B cell (primary cell): ENCODE measurements at regions of chr1 and their contacts with region 1.

Region 1: GRCh38 chr1:201709564-201710295 is 119.2 kb upstream of the IPO9 start:
- DNase-seq: peak; percentile 68
- ATAC-seq: peak; percentile 87
- H3K4me3 ChIP-seq: no peak overlapping the region
- H3K4me3 Mint-ChIP-seq: no peak overlapping the region
- H3K27ac ChIP-seq: no peak overlapping the region
- H3K27ac Mint-ChIP-seq: no peak overlapping the region
- H3K4me1 ChIP-seq: no peaks in the 10 kb centered on the region
- H3K4me1 Mint-ChIP-seq: no peaks in the 10 kb centered on the region
- H3K27me3 ChIP-seq: peaks cover 0 to under 1% (median 0%) of the 10 kb centered on the region in 4 experiments
- H3K27me3 Mint-ChIP-seq: peaks cover 4% of the 10 kb centered on the region
- CTCF ChIP-seq: peak; percentile 87

Region 2: GRCh38 chr1:201681375-201681774 is 28.4 kb before region 1 on chr1:
- CTCF ChIA-PET with region 1: no interaction called
- POLR2A ChIA-PET with region 1: no interaction called
- intact Hi-C with region 1: no loop called
- DNase-seq: no peak
- ATAC-seq: no peak
- H3K4me3 ChIP-seq: no peak overlapping the region
- H3K4me3 Mint-ChIP-seq: no peak overlapping the region
- H3K27ac ChIP-seq: no peak overlapping the region
- H3K27ac Mint-ChIP-seq: no peak overlapping the region
- H3K4me1 ChIP-seq: no peaks in the 10 kb centered on the region
- H3K4me1 Mint-ChIP-seq: no peaks in the 10 kb centered on the region
- H3K27me3 ChIP-seq: peaks cover 0 to 7% (median 0%) of the 10 kb centered on the region in 4 experiments
- H3K27me3 Mint-ChIP-seq: peaks cover 27% of the 10 kb centered on the region
- CTCF ChIP-seq: no peak

Region 3: GRCh38 chr1:201719812-201720521 is 10.2 kb after region 1 on chr1:
- CTCF ChIA-PET with region 1: interaction called, 30 read pairs
- POLR2A ChIA-PET with region 1: no interaction called
- intact Hi-C with region 1: no loop called
- DNase-seq: no peak
- ATAC-seq: no peak
- H3K4me3 ChIP-seq: no peak overlapping the region
- H3K4me3 Mint-ChIP-seq: no peak overlapping the region
- H3K27ac ChIP-seq: no peak overlapping the region
- H3K27ac Mint-ChIP-seq: no peak overlapping the region
- H3K4me1 ChIP-seq: peaks cover 22 to 31% of the 10 kb centered on the region in 2 donors
- H3K4me1 Mint-ChIP-seq: peaks cover 25% of the 10 kb centered on the region
- H3K27me3 ChIP-seq: peaks cover 0 to 9% (median 2%) of the 10 kb centered on the region in 4 experiments
- H3K27me3 Mint-ChIP-seq: peaks cover 11% of the 10 kb centered on the region
- CTCF ChIP-seq: no peak

Region 4: GRCh38 chr1:201783572-201783971 is 73.8 kb after region 1 on chr1:
- CTCF ChIA-PET with region 1: interaction called, 228 read pairs
- POLR2A ChIA-PET with region 1: no interaction called
- intact Hi-C with region 1: no loop called
- DNase-seq: no peak
- ATAC-seq: no peak
- H3K4me3 ChIP-seq: no peak overlapping the region
- H3K4me3 Mint-ChIP-seq: no peak overlapping the region
- H3K27ac ChIP-seq: no peak overlapping the region
- H3K27ac Mint-ChIP-seq: no peak overlapping the region
- H3K4me1 ChIP-seq: no peaks in the 10 kb centered on the region
- H3K4me1 Mint-ChIP-seq: no peaks in the 10 kb centered on the region
- H3K27me3 ChIP-seq: no peaks in the 10 kb centered on the region
- H3K27me3 Mint-ChIP-seq: no peaks in the 10 kb centered on the region
- CTCF ChIP-seq: no peak

Region 5: DNA sequence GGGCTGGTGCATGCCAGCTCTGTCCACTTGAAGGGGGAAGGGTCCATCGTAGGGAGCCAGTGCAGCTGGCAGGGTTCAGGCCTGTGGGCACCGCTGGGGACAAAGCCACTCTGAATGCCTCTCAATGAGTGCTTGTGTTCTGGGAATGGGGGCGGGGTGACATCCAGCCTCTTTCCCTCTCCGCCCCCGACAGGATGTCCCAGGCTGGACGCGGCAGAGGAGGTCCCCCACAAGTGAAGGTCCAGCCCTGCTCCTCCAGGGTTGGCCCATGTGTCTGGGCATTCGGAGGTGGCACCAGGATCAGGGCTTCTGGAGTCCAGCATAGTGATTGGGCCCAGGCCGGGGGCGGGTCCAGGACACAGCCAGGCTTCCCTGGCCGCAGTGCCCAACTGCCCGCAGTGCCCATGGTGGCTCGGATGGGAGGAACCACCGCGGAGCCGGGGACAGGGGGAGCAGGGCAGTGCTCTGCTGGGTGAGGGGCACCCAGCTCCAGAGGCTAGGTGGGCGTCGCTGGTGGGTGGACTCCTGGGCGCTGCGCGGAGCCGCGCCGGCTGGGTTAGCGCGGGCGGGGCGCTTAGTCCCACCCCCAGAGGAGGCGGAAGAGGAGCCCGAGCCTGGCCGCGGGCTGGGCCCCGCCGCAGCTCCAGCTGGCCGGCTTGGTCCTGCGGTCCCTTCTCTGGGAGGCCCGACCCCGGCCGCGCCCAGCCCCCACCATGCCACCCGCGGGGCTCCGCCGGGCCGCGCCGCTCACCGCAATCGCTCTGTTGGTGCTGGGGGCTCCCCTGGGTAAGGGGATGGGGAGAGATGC is 178.8 kb after region 1 on chr1 and contains the start of gene SHISA4:
- CTCF ChIA-PET with region 1: no interaction called
- POLR2A ChIA-PET with region 1: no interaction called
- intact Hi-C with region 1: no loop called
- DNase-seq: peak; percentile 27
- ATAC-seq: peak; percentile 58
- H3K4me3 ChIP-seq: peak within 1 kb of the TSS in 4 of 5 experiments; percentile 11 to 59 (median 36)
- H3K4me3 Mint-ChIP-seq: peak within 1 kb of the TSS; percentile 84
- H3K27ac ChIP-seq: no peak within 1 kb of the TSS
- H3K27ac Mint-ChIP-seq: no peak within 1 kb of the TSS
- H3K4me1 ChIP-seq: peaks cover 24 to 28% of the 10 kb centered on the region in 2 donors
- H3K4me1 Mint-ChIP-seq: peaks cover 19% of the 10 kb centered on the region
- H3K27me3 ChIP-seq: peaks cover 0 to 67% (median 37%) of the 10 kb centered on the region in 4 experiments
- H3K27me3 Mint-ChIP-seq: peaks cover 43% of the 10 kb centered on the region
- CTCF ChIP-seq: no peak
- total RNA-seq, gene SHISA4: not detected in 2 replicates